A549 (cell line): ENCODE measurements at regions of chr13 and their contacts with region 1.

Region 1: GRCh38 chr13:46160471-46161066 is 21.4 kb downstream of the LCP1 start:
- DNase-seq: peak; percentile 47 to 55
- ATAC-seq: peak; percentile 56 to 81; a peak in 4 of 6 replicates
- H3K4me3 ChIP-seq: no peak overlapping the region
- H3K27ac ChIP-seq: no peak overlapping the region
- H3K4me1 ChIP-seq: no peaks in the 10 kb centered on the region
- CTCF ChIP-seq: peak; percentile 72
- EP300 ChIP-seq: no peak
- POLR2A ChIP-seq: no peak
- RAD21 ChIP-seq: peak; percentile 73 to 74

Region 2: GRCh38 chr13:46137627-46138317 is 22.8 kb before region 1 on chr13:
- CTCF ChIA-PET with region 1: interaction called, 16 read pairs
- POLR2A ChIA-PET with region 1: no interaction called
- DNase-seq: no peak
- ATAC-seq: no peak
- H3K4me3 ChIP-seq: no peak overlapping the region
- H3K27ac ChIP-seq: no peak overlapping the region
- H3K4me1 ChIP-seq: peaks cover 7% of the 10 kb centered on the region
- CTCF ChIP-seq: no peak
- EP300 ChIP-seq: no peak
- POLR2A ChIP-seq: no peak
- RAD21 ChIP-seq: no peak

Region 3: GRCh38 chr13:46149272-46150133 is 11.1 kb before region 1 on chr13:
- CTCF ChIA-PET with region 1: interaction called, 26 read pairs
- POLR2A ChIA-PET with region 1: no interaction called
- DNase-seq: no peak
- ATAC-seq: peak in 1 of 2 experiments; percentile 25; a peak in 2 of 6 replicates
- H3K4me3 ChIP-seq: no peak overlapping the region
- H3K27ac ChIP-seq: no peak overlapping the region
- H3K4me1 ChIP-seq: peaks cover 14% of the 10 kb centered on the region; the same call in 2 of the 3 replicates
- CTCF ChIP-seq: no peak
- EP300 ChIP-seq: no peak
- POLR2A ChIP-seq: no peak
- RAD21 ChIP-seq: no peak

Region 4: DNA sequence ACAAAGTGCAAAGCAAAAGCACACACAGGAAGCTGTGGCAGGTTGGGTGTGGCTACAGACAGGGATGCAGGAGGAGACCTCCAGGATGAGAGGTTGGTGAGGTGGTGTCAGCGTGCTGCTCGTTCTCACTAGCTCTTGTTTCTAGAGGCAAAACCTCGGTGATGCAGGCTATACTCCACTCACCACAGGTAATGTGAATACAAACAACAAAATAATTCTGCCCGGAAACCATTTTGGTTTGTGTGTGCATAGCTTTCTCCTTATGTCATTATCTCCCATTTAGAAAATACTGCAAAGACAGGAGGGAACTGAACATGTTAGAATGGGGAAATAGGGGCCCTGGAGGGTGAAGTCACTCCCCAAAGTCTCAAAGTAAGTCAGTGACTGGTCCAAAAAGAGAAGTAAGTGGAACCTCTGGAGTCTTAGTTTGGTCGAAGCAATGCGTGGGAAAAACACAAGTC is 12.0 kb after region 1 on chr13:
- CTCF ChIA-PET with region 1: interaction called, 10 read pairs
- POLR2A ChIA-PET with region 1: no interaction called
- DNase-seq: no peak
- ATAC-seq: no peak
- H3K4me3 ChIP-seq: no peak overlapping the region
- H3K27ac ChIP-seq: no peak overlapping the region
- H3K4me1 ChIP-seq: no peaks in the 10 kb centered on the region
- CTCF ChIP-seq: no peak
- EP300 ChIP-seq: no peak
- POLR2A ChIP-seq: no peak
- RAD21 ChIP-seq: no peak

Region 5: DNA sequence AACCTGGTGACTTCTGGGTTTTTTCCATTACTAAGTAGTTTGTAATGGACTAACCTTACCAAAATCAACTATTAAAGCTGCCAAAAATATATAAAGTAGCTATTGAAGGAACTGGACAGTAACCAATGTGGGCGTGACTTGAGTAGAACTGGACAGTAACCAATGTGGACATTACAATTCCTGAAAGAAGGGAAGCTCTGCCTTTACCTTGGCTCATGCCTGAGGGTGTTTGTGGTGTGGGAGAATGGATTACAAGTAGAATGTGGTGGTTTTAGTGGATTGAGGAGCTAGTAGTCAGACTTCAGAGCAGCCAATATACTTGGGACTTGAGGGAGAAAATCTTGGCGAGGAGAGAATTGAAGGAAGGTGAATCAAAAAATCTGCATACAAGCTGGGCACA is 68.7 kb after region 1 on chr13:
- CTCF ChIA-PET with region 1: no interaction called
- POLR2A ChIA-PET with region 1: no interaction called
- DNase-seq: no peak
- ATAC-seq: no peak
- H3K4me3 ChIP-seq: no peak overlapping the region
- H3K27ac ChIP-seq: no peak overlapping the region
- H3K4me1 ChIP-seq: no peaks in the 10 kb centered on the region
- CTCF ChIP-seq: no peak
- EP300 ChIP-seq: no peak
- POLR2A ChIP-seq: no peak
- RAD21 ChIP-seq: no peak